CD8-positive, alpha-beta T cell (primary cell): ENCODE measurements at regions of chrX and their contacts with region 1.

Region 1: DNA sequence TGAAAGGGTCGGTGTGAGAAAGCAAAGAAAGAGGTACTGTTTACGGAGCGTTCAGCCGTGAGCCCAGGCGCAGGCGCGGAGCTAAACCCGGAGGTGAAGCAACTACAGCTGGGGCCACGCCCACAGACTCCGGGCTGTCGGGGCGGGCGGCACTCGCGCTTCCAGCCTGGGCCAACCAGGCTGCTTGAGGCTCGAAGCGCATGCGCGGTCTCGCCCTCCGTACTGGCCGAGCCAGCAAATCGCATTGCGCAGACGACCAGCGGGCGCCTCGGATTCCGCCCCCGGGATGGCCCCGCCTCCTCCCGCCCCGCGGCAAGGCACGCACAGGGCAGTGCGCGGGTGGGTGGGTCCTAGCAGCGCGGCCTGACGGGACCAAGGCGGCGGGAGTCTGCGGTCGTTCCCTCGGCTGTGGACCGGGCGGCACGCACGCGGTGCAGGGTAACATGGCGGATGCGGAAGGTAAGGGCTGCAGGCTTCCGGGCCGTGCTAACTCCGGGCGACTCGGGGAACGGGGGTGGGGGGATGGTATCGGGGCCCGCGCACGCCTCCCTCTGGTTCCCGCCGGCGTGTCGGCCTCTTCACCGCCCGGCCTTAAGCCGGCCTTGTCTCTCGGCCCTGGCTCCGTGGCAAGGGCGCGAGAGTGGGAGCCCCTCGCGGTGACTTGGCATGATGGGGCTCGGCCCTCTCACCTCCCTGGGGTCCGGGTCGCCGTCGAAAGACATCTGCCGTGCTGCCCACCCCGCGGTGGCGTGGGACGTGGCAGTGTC is at the start of gene DKC1:
- DNase-seq: peak; percentile 86 to 97 (median 94)
- ATAC-seq: peak; percentile 87
- H3K4me3 ChIP-seq: peak within 1 kb of the TSS; percentile 71 to 85
- H3K4me3 Mint-ChIP-seq: peak within 1 kb of the TSS; percentile 87
- H3K27ac ChIP-seq: peak within 1 kb of the TSS; percentile 70 to 74
- H3K27ac Mint-ChIP-seq: peak within 1 kb of the TSS; percentile 95
- H3K4me1 ChIP-seq: peaks cover 13% of the 10 kb centered on the region
- H3K4me1 Mint-ChIP-seq: peaks cover 28% of the 10 kb centered on the region
- H3K27me3 ChIP-seq: no peaks in the 10 kb centered on the region
- H3K27me3 Mint-ChIP-seq: no peaks in the 10 kb centered on the region
- CTCF ChIP-seq: no peak
- total RNA-seq, gene DKC1: 68.0 to 72.8 TPM

Region 2: DNA sequence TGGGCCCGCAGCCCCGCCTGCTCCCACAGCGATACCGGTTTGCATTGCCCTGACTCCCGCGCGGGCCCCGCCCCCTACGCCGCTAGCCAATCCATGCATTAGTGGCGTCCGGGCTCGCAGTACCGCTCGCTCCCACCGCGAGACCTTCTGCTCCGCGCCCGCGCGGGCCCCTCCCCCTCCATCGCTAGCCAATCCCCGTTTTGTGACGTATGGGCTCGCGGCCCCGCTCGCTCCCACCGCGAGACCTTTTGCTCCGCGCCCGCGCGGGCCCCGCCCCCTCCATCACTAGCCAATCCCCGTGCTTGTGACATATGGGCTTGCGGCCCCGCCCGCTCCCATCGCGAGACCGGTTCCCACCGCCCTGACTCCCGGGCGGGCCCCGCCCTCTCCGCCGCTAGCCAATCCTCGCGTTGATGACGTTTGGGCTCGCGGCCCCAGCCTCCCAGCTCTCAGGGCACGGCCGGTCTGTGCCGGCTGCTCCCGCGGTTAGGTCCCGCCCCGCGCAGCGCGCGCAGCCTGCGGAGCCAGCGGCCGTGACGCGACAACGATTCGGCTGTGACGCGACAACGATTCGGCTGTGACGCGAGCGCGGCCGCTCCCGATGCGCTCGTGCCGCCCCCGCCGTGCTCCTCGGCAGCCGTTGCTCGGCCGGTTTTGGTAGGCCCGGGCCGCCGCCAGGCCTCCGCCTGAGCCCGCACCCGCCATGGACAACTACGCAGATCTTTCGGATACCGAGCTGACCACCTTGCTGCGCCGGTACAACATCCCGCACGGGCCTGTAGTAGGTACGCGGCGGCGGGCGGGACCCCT is 383.7 kb before region 1 on chrX and contains the start of gene EMD:
- CTCF ChIA-PET with region 1: no interaction called
- POLR2A ChIA-PET with region 1: no interaction called
- intact Hi-C with region 1: loop called in 1 of 2 experiments (anchors 5 kb)
- DNase-seq: peak; percentile 88 to 98 (median 94)
- ATAC-seq: peak; percentile 79
- H3K4me3 ChIP-seq: peak within 1 kb of the TSS; percentile 73 to 75
- H3K4me3 Mint-ChIP-seq: peak within 1 kb of the TSS; percentile 85
- H3K27ac ChIP-seq: peak within 1 kb of the TSS; percentile 98 to 99
- H3K27ac Mint-ChIP-seq: peak within 1 kb of the TSS; percentile 93
- H3K4me1 ChIP-seq: peaks cover 28% of the 10 kb centered on the region
- H3K4me1 Mint-ChIP-seq: peaks cover 18% of the 10 kb centered on the region
- H3K27me3 ChIP-seq: no peaks in the 10 kb centered on the region
- H3K27me3 Mint-ChIP-seq: no peaks in the 10 kb centered on the region
- CTCF ChIP-seq: no peak
- total RNA-seq, gene EMD: 176 TPM

Region 3: DNA sequence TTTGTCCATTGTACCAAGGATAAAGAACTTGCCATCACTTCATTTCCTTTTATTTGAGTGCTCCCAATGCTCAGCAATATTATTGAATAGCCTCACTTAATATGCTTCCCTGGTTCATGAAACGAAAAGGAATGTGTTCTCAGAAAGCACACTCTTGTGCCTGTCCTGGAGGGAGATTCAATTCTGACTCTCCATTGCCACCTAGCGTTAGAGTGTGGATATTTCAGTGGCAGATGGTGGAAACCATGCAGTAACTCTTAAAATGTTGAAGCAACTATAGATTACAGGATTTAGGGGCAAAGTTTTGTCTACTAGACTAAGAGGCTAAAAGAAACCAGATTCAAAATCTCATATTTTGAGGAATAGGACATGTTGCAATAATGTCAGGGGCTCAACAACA is 47.8 kb before region 1 on chrX:
- CTCF ChIA-PET with region 1: interaction called, 5 read pairs
- POLR2A ChIA-PET with region 1: interaction called, 3 read pairs
- intact Hi-C with region 1: loop called in 1 of 2 experiments (anchors 1 kb)
- DNase-seq: peak in 5 of 9 experiments; percentile 34 to 74 (median 59)
- ATAC-seq: peak; percentile 32
- H3K4me3 ChIP-seq: no peak overlapping the region
- H3K4me3 Mint-ChIP-seq: no peak overlapping the region
- H3K27ac ChIP-seq: no peak overlapping the region
- H3K27ac Mint-ChIP-seq: no peak overlapping the region
- H3K4me1 ChIP-seq: peaks cover 48% of the 10 kb centered on the region
- H3K4me1 Mint-ChIP-seq: peaks cover 64% of the 10 kb centered on the region
- H3K27me3 ChIP-seq: no peaks in the 10 kb centered on the region
- H3K27me3 Mint-ChIP-seq: no peaks in the 10 kb centered on the region
- CTCF ChIP-seq: peak; percentile 65

Region 4: DNA sequence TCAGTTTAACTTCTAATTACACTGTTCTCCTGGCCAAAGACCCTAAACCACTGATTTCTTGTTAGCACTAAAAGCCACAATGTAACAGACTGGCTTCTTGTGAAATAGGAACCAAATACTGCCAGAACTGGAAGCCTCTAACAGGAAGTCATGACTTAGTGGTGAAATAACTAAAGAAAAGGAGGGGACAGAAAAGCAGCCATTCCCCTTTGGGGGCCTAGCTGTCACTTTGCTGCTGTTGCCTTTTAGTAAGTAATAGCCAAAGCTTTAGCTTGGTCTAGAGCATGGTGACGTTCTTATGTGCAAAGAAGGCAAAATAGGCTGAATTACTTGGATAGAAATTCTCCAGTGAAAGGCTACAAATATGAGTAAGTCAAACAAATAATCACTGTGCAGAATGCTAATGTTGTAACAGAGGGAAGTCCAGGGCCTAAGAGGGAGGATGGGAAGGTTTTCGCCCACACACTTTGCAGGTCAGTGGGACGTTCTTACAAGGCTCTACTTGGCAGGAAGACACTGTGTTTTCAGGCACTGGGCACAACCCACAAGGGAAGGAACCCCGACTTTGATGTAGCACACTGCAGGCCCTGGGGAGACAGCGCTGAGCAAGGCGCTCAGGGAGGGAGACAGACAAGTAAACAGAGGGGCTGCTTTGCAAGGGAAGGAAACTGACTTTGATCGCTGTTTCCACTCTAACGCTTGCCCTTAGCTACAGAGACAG is 28.5 kb before region 1 on chrX:
- CTCF ChIA-PET with region 1: no interaction called
- POLR2A ChIA-PET with region 1: interaction called, 3 read pairs
- intact Hi-C with region 1: loop called in 1 of 2 experiments (anchors 2 kb)
- DNase-seq: peak in 6 of 9 experiments; percentile 49 to 79 (median 63)
- ATAC-seq: peak; percentile 63
- H3K4me3 ChIP-seq: peak overlapping the region; percentile 24 to 44
- H3K4me3 Mint-ChIP-seq: peak overlapping the region; percentile 65
- H3K27ac ChIP-seq: peak overlapping the region; percentile 56 to 84
- H3K27ac Mint-ChIP-seq: peak overlapping the region; percentile 97
- H3K4me1 ChIP-seq: peaks cover 97% of the 10 kb centered on the region
- H3K4me1 Mint-ChIP-seq: peaks cover 92% of the 10 kb centered on the region
- H3K27me3 ChIP-seq: no peaks in the 10 kb centered on the region
- H3K27me3 Mint-ChIP-seq: no peaks in the 10 kb centered on the region
- CTCF ChIP-seq: no peak

Region 5: DNA sequence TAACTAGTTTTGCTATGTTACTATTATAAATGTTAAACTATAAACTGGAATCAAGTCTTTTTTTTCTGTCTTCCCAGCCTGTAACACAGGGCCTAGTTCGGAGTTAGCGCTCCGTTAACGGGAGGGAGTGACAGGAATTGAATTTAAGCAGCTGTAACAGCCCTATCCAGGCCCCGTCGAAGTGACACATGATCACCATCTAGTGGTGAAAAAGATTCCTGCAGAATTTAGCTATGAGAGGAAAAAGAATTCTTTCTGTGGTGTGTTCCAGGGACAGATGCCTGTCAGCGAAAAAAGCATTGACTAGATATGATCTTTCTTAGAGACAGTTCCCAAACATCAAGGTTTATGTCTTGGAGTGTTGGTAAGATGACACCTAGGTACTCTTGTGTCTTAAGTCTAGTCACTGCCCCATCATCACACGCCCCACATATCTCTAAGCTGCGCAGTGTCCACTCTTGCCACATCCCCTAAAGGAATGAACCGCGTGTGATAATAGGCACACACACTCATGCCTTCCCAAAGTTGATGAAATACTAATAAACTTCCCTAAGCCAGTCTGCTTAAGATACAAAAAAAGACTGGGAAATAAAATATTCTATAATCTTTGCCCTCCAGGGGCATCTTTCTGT is 13.9 kb before region 1 on chrX:
- CTCF ChIA-PET with region 1: interaction called, 17 read pairs
- POLR2A ChIA-PET with region 1: interaction called, 54 read pairs
- intact Hi-C with region 1: loop called in 1 of 2 experiments (anchors 1 kb)
- DNase-seq: peak in 7 of 9 experiments; percentile 21 to 83 (median 57)
- ATAC-seq: peak; percentile 71
- H3K4me3 ChIP-seq: peak overlapping the region in 1 of 2 experiments; percentile 75
- H3K4me3 Mint-ChIP-seq: peak overlapping the region; percentile 54
- H3K27ac ChIP-seq: peak overlapping the region in 1 of 2 experiments; percentile 40
- H3K27ac Mint-ChIP-seq: peak overlapping the region; percentile 64
- H3K4me1 ChIP-seq: peaks cover 16% of the 10 kb centered on the region
- H3K4me1 Mint-ChIP-seq: peaks cover 41% of the 10 kb centered on the region
- H3K27me3 ChIP-seq: no peaks in the 10 kb centered on the region
- H3K27me3 Mint-ChIP-seq: no peaks in the 10 kb centered on the region
- CTCF ChIP-seq: peak; percentile 64

Region 6: DNA sequence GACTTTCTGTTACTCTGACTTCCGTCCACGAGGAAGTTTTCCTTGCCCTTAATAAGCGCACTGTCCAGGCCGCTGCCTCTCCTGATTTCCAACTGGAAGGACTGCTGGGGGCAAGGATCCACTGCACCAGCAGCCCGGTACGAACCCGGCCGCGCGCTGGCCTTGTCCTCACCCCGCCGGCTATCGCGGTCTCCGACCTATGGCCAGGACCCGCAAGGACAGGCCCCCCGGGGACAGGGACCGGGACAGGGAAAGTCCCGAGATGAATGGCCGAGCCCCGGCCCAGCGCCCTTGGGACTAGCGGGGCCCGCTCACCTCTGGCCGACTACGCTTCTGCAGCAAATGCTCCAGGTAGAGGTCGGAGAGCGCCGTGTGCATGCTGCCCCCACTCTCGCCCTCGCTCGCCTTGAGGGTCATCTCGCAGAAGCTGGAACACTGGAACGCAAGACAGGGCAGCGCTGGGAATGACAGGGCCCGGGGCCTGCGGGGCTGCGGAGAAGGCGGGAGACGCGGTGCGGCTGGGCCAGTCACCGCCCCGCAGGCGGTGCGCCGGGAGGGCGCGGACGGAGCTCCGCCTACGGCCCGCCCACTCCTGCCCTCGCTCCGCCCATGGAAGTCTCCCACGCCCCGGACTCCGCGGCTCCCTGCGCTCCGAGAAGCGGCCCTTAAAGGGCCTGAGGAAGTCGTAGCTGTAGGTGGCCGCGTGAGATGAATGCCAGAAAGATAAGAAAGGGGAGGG is 42.4 kb after region 1 on chrX and contains the start of gene MPP1:
- CTCF ChIA-PET with region 1: no interaction called
- POLR2A ChIA-PET with region 1: interaction called, 5 read pairs
- intact Hi-C with region 1: loop called (anchors 1 to 2 kb)
- DNase-seq: peak; percentile 49 to 87 (median 68)
- ATAC-seq: peak; percentile 99
- H3K4me3 ChIP-seq: peak within 1 kb of the TSS; percentile 65 to 79
- H3K4me3 Mint-ChIP-seq: peak within 1 kb of the TSS; percentile 80
- H3K27ac ChIP-seq: no peak within 1 kb of the TSS
- H3K27ac Mint-ChIP-seq: no peak within 1 kb of the TSS
- H3K4me1 ChIP-seq: peaks cover 27% of the 10 kb centered on the region
- H3K4me1 Mint-ChIP-seq: peaks cover 45% of the 10 kb centered on the region
- H3K27me3 ChIP-seq: no peaks in the 10 kb centered on the region
- H3K27me3 Mint-ChIP-seq: no peaks in the 10 kb centered on the region
- CTCF ChIP-seq: no peak
- total RNA-seq, gene MPP1: 6.5 to 6.9 TPM

Region 7: DNA sequence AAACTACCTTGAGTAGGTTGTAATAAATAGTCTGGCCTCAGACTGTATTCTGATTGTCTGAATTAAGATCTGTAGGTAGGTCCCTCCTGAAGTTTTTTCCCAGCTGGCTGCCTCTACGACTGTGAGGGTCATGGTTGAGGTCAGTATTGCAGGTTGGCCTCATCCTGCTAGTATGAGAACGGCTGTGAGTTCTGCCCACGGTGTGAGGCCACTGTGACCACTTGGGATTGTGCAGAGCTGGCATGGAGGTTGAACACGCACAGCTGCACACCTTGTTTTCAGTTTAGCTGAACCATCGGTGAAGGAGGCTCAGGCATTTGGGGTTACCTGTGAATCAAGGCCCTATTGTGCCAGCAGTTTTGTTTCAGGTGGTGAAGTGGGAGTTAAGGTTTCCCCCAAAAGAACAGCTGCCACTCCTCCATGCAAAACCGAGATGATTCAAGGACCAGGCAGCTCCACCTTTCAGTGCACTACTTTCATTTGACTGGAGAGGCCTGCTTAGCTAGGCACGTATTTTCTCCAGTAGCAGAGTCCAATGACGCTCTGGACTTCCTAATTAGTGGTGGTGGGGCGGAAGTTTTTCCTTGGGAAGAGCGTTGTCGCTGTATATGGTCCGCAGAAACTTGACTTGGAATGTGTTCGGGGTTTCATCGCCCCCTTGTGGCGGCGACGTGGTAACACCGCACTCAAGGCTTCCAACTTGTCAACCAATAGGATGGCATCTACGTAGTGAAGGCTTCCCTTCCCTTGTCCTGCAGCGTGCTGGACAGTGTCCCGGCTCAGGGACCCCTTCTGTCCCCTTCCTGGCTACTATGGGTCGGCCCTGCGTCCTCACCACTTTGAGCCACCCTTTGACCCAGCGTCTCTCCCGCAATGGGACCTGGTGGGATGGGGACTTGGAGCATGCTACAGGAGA is 294.4 kb after region 1 on chrX:
- CTCF ChIA-PET with region 1: no interaction called
- POLR2A ChIA-PET with region 1: no interaction called
- intact Hi-C with region 1: no loop called
- DNase-seq: peak; percentile 4 to 75 (median 40)
- ATAC-seq: peak; percentile 86
- H3K4me3 ChIP-seq: peak overlapping the region; percentile 20 to 31
- H3K4me3 Mint-ChIP-seq: peak overlapping the region; percentile 74
- H3K27ac ChIP-seq: peak overlapping the region in 1 of 2 experiments; percentile 36
- H3K27ac Mint-ChIP-seq: peak overlapping the region; percentile 62
- H3K4me1 ChIP-seq: peaks cover 12% of the 10 kb centered on the region
- H3K4me1 Mint-ChIP-seq: peaks cover 16% of the 10 kb centered on the region
- H3K27me3 ChIP-seq: no peaks in the 10 kb centered on the region
- H3K27me3 Mint-ChIP-seq: no peaks in the 10 kb centered on the region
- CTCF ChIP-seq: peak; percentile 64

Region 8: GRCh38 chrX:155535866-155536265 is 773.2 kb after region 1 on chrX:
- CTCF ChIA-PET with region 1: no interaction called
- POLR2A ChIA-PET with region 1: no interaction called
- intact Hi-C with region 1: no loop called
- DNase-seq: no peak
- ATAC-seq: no peak
- H3K4me3 ChIP-seq: no peak overlapping the region
- H3K4me3 Mint-ChIP-seq: no peak overlapping the region
- H3K27ac ChIP-seq: no peak overlapping the region
- H3K27ac Mint-ChIP-seq: no peak overlapping the region
- H3K4me1 ChIP-seq: no peaks in the 10 kb centered on the region
- H3K4me1 Mint-ChIP-seq: no peaks in the 10 kb centered on the region
- H3K27me3 ChIP-seq: no peaks in the 10 kb centered on the region
- H3K27me3 Mint-ChIP-seq: no peaks in the 10 kb centered on the region
- CTCF ChIP-seq: no peak